ENCODE measurements at regions of chr3 and their contacts with region 1.

Region 1: GRCh38 chr3:13934813-13935212 is 54.9 kb upstream of the WNT7A start:
- DNase-seq: no peak
- H3K4me3 ChIP-seq: no peak overlapping the region
- H3K27ac ChIP-seq: no peak overlapping the region
- H3K4me1 ChIP-seq: no peaks in the 10 kb centered on the region
- H3K27me3 ChIP-seq: peaks cover 47% of the 10 kb centered on the region
- CTCF ChIP-seq: no peak

Region 2: GRCh38 chr3:14057701-14058100 is 122.9 kb after region 1 on chr3:
- CTCF ChIA-PET with region 1: interaction called, 16 read pairs
- POLR2A ChIA-PET with region 1: no interaction called
- intact Hi-C with region 1: no loop called
- DNase-seq: peak in 1 of 2 experiments; percentile 40
- H3K4me3 ChIP-seq: no peak overlapping the region
- H3K27ac ChIP-seq: no peak overlapping the region
- H3K4me1 ChIP-seq: no peaks in the 10 kb centered on the region
- H3K27me3 ChIP-seq: no peaks in the 10 kb centered on the region
- CTCF ChIP-seq: no peak

Measured in PC-9 (cell line).